SK-N-SH (cell line): ENCODE measurements at regions of chr15 and their contacts with region 1.

Region 1: DNA sequence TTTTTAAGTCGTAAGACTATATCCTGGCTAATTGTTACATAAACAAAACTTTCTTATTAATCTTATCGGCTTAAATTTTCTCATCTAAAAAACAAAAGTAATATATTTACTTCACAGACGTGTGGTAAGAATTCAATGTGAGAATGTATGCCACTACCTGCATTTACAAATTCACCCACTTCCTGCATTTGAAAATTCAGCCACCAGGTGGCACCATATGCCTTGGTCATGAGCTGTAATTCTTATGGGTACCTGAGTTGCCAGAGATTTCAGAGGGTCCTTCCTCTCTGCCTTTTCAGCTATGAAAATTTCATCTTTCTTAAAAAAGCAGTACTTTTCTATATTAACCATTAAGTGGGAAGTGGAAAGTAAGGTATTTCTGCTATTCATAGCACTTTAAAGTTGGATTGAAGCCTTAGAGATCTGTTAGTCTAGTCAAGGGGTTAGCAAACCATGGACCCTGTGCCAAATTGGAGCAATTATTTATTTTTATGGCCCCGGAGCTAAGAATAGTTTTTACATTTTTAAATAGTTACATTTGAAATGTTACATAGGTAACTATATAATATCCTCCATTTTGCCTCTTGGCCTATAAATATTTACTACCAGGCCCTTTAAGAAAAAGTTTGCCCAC is 127.8 kb downstream of the HCN4 start:
- DNase-seq: peak; percentile 47
- H3K4me3 ChIP-seq: no peak overlapping the region; a peak in 1 of 4 replicates
- H3K27ac ChIP-seq: no peak overlapping the region
- H3K4me1 ChIP-seq: peaks cover 0 to 24% of the 10 kb centered on the region in 2 experiments; a peak in 2 of 4 replicates
- H3K27me3 ChIP-seq: no peaks in the 10 kb centered on the region
- CTCF ChIP-seq: peak; percentile 95
- EP300 ChIP-seq: no peak
- RAD21 ChIP-seq: peak; percentile 82

Region 2: GRCh38 chr15:72784238-72784876 is 456.6 kb before region 1 on chr15:
- CTCF ChIA-PET with region 1: interaction called, 10 read pairs
- POLR2A ChIA-PET with region 1: no interaction called
- DNase-seq: peak; percentile 64
- H3K4me3 ChIP-seq: peak overlapping the region; percentile 85 to 98
- H3K27ac ChIP-seq: peak overlapping the region; percentile 92 to 97
- H3K4me1 ChIP-seq: peaks cover 0 to 21% of the 10 kb centered on the region in 2 experiments; a peak in 2 of 4 replicates
- H3K27me3 ChIP-seq: no peaks in the 10 kb centered on the region
- CTCF ChIP-seq: peak; percentile 75
- EP300 ChIP-seq: no peak
- RAD21 ChIP-seq: peak; percentile 70

Region 3: GRCh38 chr15:73130830-73131229 is 110.2 kb before region 1 on chr15:
- CTCF ChIA-PET with region 1: interaction called, 10 read pairs
- POLR2A ChIA-PET with region 1: no interaction called
- DNase-seq: no peak
- H3K4me3 ChIP-seq: no peak overlapping the region
- H3K27ac ChIP-seq: no peak overlapping the region
- H3K4me1 ChIP-seq: no peaks in the 10 kb centered on the region; a peak in 2 of 4 replicates
- H3K27me3 ChIP-seq: no peaks in the 10 kb centered on the region
- CTCF ChIP-seq: no peak
- EP300 ChIP-seq: no peak
- RAD21 ChIP-seq: no peak

Region 4: GRCh38 chr15:73265536-73266153 is 24.7 kb after region 1 on chr15:
- CTCF ChIA-PET with region 1: interaction called, 124 read pairs
- POLR2A ChIA-PET with region 1: no interaction called
- DNase-seq: peak; percentile 53
- H3K4me3 ChIP-seq: no peak overlapping the region
- H3K27ac ChIP-seq: no peak overlapping the region
- H3K4me1 ChIP-seq: no peaks in the 10 kb centered on the region
- H3K27me3 ChIP-seq: no peaks in the 10 kb centered on the region
- CTCF ChIP-seq: peak; percentile 71
- EP300 ChIP-seq: no peak
- RAD21 ChIP-seq: peak; percentile 58

Region 5: DNA sequence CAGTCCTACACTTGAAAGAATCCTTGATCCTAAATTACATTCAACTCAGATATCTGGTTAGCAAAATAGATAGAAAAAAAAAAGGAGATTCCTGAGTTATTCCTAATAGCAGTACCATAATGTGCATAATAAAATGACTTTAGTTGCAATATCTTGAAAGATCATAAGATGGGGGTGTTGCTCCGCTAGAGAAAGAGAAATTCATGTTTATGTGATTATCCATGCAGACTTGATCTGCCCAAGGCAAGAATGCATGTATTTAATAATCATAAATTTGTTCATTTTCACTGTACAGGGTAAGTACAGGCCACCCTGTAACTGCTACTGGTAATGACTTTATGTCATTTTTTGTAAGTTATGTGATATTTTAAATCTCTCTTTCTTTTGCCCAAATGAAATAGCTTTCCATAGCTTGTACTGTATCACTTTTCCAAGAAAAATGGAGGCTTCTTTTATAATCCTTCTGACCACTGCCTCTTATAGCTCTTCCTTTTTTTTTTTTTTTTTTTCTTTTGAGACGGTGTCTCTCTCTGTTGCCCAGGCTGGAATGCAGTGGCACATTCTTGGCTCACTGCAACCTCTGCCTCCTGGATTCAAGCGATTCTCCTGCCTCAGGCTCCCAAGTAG is 43.2 kb after region 1 on chr15:
- CTCF ChIA-PET with region 1: interaction called, 124 read pairs
- POLR2A ChIA-PET with region 1: no interaction called
- DNase-seq: peak; percentile 56
- H3K4me3 ChIP-seq: no peak overlapping the region
- H3K27ac ChIP-seq: peak overlapping the region; percentile 26 to 37; a peak in 3 of 4 replicates
- H3K4me1 ChIP-seq: peaks cover 5 to 11% of the 10 kb centered on the region in 2 experiments
- H3K27me3 ChIP-seq: no peaks in the 10 kb centered on the region
- CTCF ChIP-seq: peak; percentile 65
- EP300 ChIP-seq: peak in 1 of 2 experiments; percentile 39; a peak in 1 of 4 replicates
- RAD21 ChIP-seq: peak; percentile 80